Activated B cell treated with CpG ODN at 0.5 μM for 24 hours (primary cell): ENCODE measurements at regions of chr9 and their contacts with region 1.

Region 1: DNA sequence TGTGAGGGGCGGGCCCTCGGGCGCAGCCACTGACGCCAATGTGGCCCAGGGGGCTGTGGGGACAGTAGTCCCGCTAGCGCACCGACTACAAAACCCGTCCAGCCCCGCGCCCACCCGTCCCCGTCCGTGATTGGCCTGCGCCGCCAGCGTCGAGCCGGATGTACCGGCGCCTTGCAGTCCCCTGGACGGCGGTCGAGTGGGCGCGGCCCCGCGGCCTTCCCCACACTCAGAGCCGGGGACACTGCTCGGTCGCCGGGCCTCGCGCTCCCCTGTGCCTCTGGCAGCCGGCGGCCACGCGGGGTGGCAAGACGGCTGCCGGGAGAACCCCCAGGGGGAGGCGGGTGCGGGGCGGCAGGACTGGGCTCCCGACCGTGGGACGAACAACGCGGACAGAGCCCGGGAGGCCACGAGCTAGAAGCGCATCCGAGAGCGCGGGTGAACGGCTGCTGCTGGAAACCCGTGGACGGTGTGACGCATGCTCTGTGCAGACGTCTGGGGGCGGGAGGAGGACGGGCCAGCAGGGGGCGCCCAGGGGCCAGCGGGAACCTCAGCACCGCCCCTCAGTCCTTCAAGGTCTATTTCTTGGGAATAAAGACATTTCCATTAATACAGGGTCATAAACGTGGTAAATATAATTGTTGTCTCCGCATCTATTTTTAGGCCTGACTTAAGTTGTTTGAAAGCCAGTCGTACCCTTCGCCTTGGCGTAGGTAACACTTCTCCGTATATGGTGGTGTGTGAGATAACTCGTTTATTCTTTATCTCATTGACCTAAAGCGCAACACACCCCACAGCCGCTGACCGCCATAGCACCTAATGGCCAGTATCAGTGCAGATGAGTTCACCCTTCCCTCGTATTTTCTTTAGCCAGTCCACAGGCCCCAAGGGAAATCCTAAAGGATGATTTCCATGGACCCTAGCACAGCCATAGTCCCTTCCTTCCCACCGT is 629 bp upstream of the BICD2 start:
- DNase-seq: peak; percentile 97
- ATAC-seq: peak; percentile 91
- H3K4me3 Mint-ChIP-seq: peak overlapping the region; percentile 90
- H3K27ac Mint-ChIP-seq: peak overlapping the region; percentile 95
- H3K4me1 Mint-ChIP-seq: peaks cover 63% of the 10 kb centered on the region
- H3K27me3 Mint-ChIP-seq: no peaks in the 10 kb centered on the region
- CTCF ChIP-seq: peak; percentile 71

Region 2: GRCh38 chr9:92115071-92115858 is 650.0 kb before region 1 on chr9 and contains the start of gene SPTLC1:
- CTCF ChIA-PET with region 1: no interaction called
- POLR2A ChIA-PET with region 1: no interaction called
- intact Hi-C with region 1: loop called (anchors 1 kb)
- DNase-seq: peak; percentile 93
- ATAC-seq: peak; percentile 98
- H3K4me3 Mint-ChIP-seq: peak within 1 kb of the TSS; percentile 100
- H3K27ac Mint-ChIP-seq: peak within 1 kb of the TSS; percentile 99
- H3K4me1 Mint-ChIP-seq: peaks cover 24% of the 10 kb centered on the region
- H3K27me3 Mint-ChIP-seq: no peaks in the 10 kb centered on the region
- CTCF ChIP-seq: no peak
- total RNA-seq, gene SPTLC1: 40.8 and 41.0 TPM in 2 replicates

Region 3: DNA sequence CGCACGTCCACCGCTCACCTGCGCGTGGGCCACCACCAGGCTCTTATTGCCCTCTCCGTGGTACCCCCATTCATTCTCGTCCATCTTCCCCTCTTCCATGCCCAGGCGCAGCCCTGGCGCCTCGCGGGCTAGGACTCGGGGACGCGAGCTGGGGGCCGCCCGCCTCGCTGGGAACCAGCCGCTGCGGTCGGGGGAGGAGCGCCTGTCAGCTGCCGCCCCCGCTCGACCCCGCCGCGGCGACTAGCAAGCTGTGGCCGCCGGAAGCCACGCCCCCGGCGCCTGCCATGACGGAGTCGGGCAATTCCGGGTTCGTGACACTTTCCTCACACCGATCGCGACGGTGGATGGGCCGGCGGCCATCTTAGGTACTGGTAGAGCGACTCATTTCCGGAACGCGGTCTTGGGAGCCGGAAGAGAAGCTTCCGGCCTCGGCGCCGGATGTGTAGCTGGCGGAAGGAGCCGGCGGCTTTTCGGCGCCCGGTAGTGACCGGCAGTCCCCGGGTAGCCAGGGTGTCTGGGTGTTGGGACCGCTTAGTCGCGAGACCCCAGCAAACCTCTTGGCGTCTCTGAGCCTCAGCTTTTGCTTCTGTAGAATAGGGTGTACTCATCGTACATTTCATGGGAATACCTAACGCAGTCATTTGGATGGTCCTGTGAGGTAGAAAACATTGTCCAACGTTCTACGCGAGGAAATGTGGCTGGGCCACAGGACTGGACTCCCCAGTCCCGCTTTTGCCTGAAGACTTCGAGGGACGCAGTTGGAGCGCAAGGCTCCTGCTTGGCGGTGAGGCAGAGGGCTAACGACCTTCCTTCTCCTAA is 95.2 kb before region 1 on chr9 and contains the start of gene IPPK:
- CTCF ChIA-PET with region 1: interaction called, 8 read pairs
- POLR2A ChIA-PET with region 1: interaction called, 24 read pairs
- intact Hi-C with region 1: loop called (anchors 1 kb)
- DNase-seq: peak; percentile 94
- ATAC-seq: peak; percentile 93
- H3K4me3 Mint-ChIP-seq: peak within 1 kb of the TSS; percentile 96
- H3K27ac Mint-ChIP-seq: peak within 1 kb of the TSS; percentile 94
- H3K4me1 Mint-ChIP-seq: peaks cover 25% of the 10 kb centered on the region
- H3K27me3 Mint-ChIP-seq: no peaks in the 10 kb centered on the region
- CTCF ChIP-seq: no peak
- total RNA-seq, gene IPPK: 9.7 and 9.8 TPM in 2 replicates

Region 4: DNA sequence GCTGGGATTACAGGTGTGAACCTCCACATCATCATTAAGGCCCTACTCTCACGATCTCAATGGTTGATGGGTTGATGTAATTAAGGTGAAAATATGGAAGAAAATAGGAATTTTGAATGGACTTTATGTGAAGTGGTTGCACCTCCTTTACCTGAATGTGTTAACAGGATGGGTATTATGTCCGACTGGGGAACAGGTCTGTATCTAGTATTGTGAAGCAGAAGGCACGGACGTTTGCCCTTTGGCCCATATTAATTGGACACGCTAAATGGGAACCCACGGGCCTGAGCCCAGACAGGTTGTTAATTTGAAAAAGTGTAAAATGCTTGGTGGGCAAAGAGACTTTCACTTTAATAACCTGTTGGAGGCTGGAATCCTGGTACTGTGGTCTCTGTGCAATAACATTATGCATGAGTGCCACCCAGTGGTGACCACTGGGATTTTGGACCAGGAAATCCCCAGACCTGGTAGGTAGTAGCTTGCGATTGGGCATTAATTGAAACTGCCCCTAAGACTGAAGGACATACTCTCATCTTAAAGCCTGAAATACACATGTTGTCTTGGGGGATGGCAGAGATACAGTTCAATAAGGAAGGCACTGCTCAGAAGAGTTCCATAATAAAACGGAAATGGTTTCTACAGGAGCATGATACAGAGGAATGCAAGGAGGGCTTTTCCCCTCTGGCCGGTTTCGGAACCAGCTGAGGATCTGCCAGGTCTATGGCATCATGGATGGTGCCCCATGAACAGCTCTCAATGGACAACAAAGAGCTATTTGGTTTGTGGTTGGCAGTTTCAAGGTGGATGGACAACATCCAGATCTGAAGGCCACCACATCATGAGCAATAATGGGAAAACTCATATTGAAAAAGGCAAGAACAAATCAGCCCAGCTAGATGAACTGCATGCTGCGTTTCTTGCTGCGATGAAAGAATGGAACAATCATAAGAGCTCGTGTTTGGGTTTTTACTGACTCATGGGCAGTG is 25.6 kb after region 1 on chr9:
- CTCF ChIA-PET with region 1: interaction called, 10 read pairs
- POLR2A ChIA-PET with region 1: interaction called, 4 read pairs
- intact Hi-C with region 1: loop called (anchors 1 kb)
- DNase-seq: peak; percentile 65
- ATAC-seq: peak; percentile 98
- H3K4me3 Mint-ChIP-seq: no peak overlapping the region
- H3K27ac Mint-ChIP-seq: no peak overlapping the region
- H3K4me1 Mint-ChIP-seq: peaks cover 6% of the 10 kb centered on the region
- H3K27me3 Mint-ChIP-seq: peaks cover 12% of the 10 kb centered on the region
- CTCF ChIP-seq: peak; percentile 84

Region 5: DNA sequence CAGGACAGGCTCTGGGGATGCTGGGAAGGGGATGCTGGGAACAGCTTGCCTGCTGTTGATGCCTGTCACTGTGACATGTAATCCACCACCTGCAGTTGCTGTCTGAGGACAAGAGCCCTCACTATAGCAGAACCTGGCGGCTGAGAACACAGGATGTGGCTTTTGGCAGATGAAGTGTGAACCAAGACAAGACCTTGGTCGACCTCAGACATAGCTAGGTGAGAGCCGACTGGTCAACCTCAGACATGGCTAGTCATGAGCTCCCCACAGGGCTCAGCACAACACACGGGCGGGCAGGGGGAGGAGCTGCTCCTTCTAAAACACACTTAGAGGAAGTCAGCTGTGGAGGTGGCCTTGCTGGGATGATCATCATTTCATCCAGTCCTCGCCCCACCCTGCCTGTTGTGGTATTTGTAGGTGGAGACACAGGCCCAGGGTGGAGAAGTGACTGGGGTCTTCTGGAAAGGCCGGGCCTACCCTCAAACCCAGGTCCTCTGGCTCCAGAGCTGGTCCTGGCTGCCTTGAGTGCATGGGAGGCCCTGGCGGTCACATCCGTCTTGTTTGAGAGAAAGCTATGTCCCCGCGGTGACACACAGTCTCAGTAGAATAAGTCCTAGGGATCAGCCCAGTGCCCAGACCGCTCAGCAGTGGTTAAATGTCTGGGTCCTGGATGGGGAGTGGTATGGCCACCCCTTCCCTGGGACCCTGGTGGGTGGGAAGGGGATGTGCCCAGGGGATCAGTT is 299.3 kb after region 1 on chr9:
- CTCF ChIA-PET with region 1: no interaction called
- POLR2A ChIA-PET with region 1: no interaction called
- intact Hi-C with region 1: loop called (anchors 10 kb)
- DNase-seq: peak; percentile 53
- ATAC-seq: peak; percentile 85
- H3K4me3 Mint-ChIP-seq: peak overlapping the region; percentile 73
- H3K27ac Mint-ChIP-seq: peak overlapping the region; percentile 95
- H3K4me1 Mint-ChIP-seq: peaks cover 77% of the 10 kb centered on the region
- H3K27me3 Mint-ChIP-seq: no peaks in the 10 kb centered on the region
- CTCF ChIP-seq: no peak

Region 6: GRCh38 chr9:93566408-93567270 is 801.4 kb after region 1 on chr9:
- CTCF ChIA-PET with region 1: no interaction called
- POLR2A ChIA-PET with region 1: no interaction called
- intact Hi-C with region 1: loop called (anchors 2 kb)
- DNase-seq: peak; percentile 100
- ATAC-seq: peak; percentile 98
- H3K4me3 Mint-ChIP-seq: peak overlapping the region; percentile 86
- H3K27ac Mint-ChIP-seq: peak overlapping the region; percentile 92
- H3K4me1 Mint-ChIP-seq: peaks cover 33% of the 10 kb centered on the region
- H3K27me3 Mint-ChIP-seq: no peaks in the 10 kb centered on the region
- CTCF ChIP-seq: peak; percentile 37